ENCODE measurements at regions of chr12 and their contacts with region 1.

Region 1: DNA sequence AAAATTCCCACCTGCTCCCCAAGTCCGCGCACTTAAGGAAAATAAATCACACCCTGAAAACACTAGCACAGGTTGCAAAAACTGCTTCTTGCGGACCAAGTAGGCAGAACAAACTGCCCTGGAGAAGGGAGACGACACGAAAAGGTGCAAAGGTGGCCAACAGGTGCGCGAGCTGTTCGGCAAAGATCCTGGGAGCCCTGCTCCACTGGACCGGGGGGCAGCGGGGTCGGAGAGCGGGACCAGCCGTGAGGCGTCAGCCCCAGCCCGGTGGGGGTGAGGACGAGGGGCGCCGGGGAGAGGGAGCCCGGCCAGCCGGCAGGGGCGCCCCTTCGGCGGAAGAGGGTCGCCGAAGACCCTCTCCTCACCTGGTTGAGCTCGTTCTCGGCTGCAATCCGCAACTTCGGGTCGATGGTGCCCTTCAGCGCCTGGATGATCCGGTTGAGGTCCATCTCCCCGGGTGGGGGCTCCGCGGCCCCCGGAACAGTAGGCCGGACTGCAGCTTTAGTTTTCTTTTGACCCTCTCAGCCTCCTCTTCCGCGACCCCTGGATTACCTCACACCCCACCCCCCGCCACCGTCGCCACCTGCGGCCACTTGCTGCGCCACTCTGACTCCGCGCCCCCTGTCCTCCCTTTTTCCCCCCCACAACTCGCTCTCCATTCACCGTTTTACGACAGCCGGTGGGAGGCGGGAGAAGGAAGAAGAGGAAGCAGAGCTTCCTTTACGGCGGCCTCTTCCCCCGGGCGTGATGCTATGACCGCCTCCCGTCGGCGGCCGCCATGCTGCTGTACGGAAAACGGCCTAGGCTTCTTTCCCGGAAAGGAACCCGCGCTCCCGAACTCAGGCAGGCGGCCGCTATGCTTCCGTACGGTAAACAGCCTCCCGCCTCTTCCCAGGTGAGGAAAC is at the start of gene IPO8:
- DNase-seq: peak; percentile 95
- H3K4me3 ChIP-seq: peak within 1 kb of the TSS; percentile 99
- H3K27ac ChIP-seq: peak within 1 kb of the TSS; percentile 49 to 89; a peak in 3 of 4 replicates
- H3K4me1 ChIP-seq: peaks cover 20 to 29% of the 10 kb centered on the region in 2 experiments; a peak in 3 of 4 replicates
- H3K27me3 ChIP-seq: no peaks in the 10 kb centered on the region
- CTCF ChIP-seq: peak; percentile 50
- EP300 ChIP-seq: no peak
- RAD21 ChIP-seq: no peak
- polyA plus RNA-seq, gene IPO8: 5.8 and 8.1 TPM in 2 replicates

Region 2: GRCh38 chr12:30707613-30708342 is 12.3 kb after region 1 on chr12:
- CTCF ChIA-PET with region 1: interaction called, 11 read pairs
- POLR2A ChIA-PET with region 1: interaction called, 3 read pairs
- DNase-seq: no peak
- H3K4me3 ChIP-seq: no peak overlapping the region
- H3K27ac ChIP-seq: no peak overlapping the region
- H3K4me1 ChIP-seq: no peaks in the 10 kb centered on the region
- H3K27me3 ChIP-seq: no peaks in the 10 kb centered on the region
- CTCF ChIP-seq: no peak
- EP300 ChIP-seq: no peak
- RAD21 ChIP-seq: no peak

Measured in SK-N-SH (cell line).